Tibial artery (tissue), 4 donors: ENCODE measurements at regions of chr6 and their contacts with region 1.

Region 1: GRCh38 chr6:26363882-26364701 is 906 bp upstream of the BTN3A2 start:
- DNase-seq: no peak
- H3K4me3 ChIP-seq: peak overlapping the region; percentile 61 to 65
- H3K27ac ChIP-seq: peak overlapping the region; percentile 81 to 84
- H3K4me1 ChIP-seq: peaks cover 0 to 11% (median 8%) of the 10 kb centered on the region in 4 donors
- H3K27me3 ChIP-seq: no peaks in the 10 kb centered on the region
- CTCF ChIP-seq: no peak

Region 2: DNA sequence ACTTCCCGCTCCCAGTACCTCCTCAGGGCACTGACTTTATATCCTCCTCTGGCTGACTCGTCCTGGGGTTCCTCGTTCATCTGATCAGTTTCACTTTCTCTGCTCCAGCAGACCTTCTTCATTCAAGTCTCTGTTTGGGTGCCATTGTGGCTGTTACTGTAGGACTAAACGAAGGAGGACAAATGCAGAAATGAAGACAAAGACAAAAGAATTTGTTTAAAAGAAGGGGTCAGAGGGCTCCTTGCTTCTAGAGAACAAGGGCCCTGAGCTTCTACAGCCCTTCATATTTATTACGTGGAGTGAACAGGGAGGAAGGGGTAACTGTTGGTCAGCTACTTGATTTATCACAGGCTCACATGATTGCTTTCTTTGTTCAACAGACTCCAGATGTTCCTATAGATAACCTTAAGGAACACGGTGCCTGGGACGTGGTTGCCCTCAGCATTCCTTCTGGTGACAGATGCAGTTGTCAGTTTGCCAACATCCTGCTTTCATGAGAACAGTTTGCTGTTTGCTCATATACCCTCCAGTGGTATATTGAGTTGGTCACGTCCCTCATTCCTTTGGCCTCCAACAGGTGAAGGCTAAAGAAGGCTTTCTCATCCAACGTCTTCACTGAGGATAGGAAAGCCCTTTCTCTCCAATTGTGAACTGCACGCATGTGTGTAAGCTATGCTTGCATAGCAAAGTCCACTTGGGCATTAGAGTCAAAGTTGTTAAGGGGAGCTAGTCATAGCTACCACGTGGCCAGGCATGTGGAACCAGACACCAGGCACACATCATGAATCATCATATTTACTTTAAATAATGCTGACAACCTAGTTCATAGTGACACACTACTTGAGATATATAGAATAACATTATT is 68.2 kb before region 1 on chr6:
- intact Hi-C with region 1: no loop called
- DNase-seq: no peak
- H3K4me3 ChIP-seq: no peak overlapping the region
- H3K27ac ChIP-seq: no peak overlapping the region
- H3K4me1 ChIP-seq: no peaks in the 10 kb centered on the region
- H3K27me3 ChIP-seq: peaks cover 0 to 33% of the 10 kb centered on the region in 2 donors
- CTCF ChIP-seq: no peak

Region 3: GRCh38 chr6:26401987-26402658 is 38.0 kb after region 1 on chr6 and contains the start of gene BTN3A1:
- intact Hi-C with region 1: loop called (anchors 5 kb)
- DNase-seq: peak; percentile 57 to 80
- H3K4me3 ChIP-seq: peak within 1 kb of the TSS; percentile 59 to 66
- H3K27ac ChIP-seq: peak within 1 kb of the TSS; percentile 79 to 83
- H3K4me1 ChIP-seq: peaks cover 0 to 14% (median 4%) of the 10 kb centered on the region in 4 donors
- H3K27me3 ChIP-seq: no peaks in the 10 kb centered on the region
- CTCF ChIP-seq: no peak

Region 4: DNA sequence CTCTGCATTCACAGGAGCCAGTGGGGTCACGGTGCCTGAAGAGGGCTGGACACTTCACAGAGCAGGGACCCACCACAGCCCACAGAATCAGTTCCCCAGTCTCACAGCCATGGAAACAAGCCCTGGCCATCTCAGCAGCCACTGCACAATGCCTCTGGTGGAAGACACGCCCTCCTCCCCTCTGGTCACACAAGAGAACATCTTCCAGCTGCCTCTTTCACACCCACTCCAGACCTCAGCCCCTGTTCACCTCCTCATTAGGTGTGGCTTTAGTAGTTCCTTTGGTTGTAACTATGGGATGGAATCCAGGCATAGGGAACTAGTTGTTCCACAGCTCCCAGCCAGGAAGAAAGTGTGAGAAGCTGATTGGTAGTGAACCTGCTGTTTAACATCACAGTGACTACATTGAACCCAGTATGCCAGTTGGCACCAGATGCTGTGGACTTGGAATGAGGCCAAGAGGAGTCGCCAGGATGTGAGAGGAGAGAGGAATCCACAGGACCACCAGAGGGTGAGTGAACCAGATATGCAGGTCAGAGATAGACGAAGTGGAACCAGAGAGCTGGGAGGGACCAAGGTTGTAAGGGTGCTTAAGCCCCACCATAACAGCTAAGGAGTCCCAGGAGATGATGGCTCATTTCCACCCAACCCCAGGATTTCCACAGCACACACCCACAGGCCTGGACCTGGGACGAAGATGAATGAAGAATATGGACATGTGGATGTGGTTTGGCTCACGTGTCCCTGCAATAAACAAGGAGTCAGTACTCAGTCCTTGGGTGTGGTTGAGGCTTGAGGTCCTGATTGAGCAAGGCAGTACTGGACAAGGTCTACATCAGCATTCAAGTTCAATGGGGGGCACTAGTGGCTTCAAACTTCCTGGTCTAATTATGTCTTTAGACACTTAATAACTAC is 67.4 kb after region 1 on chr6:
- intact Hi-C with region 1: loop called (anchors 10 kb)
- DNase-seq: peak; percentile 67 to 74
- H3K4me3 ChIP-seq: no peak overlapping the region
- H3K27ac ChIP-seq: peak overlapping the region; percentile 71
- H3K4me1 ChIP-seq: peaks cover 0 to 27% (median 14%) of the 10 kb centered on the region in 4 donors
- H3K27me3 ChIP-seq: no peaks in the 10 kb centered on the region
- CTCF ChIP-seq: no peak